Caco-2 (cell line): ENCODE measurements at regions of chr1 and their contacts with region 1.

Region 1: GRCh38 chr1:10209905-10210810 is at the start of gene KIF1B:
- DNase-seq: peak; percentile 96 to 99
- H3K4me3 ChIP-seq: peak within 1 kb of the TSS; percentile 76
- H3K4me3 Mint-ChIP-seq: peak within 1 kb of the TSS; percentile 95
- H3K27ac Mint-ChIP-seq: peak within 1 kb of the TSS; percentile 88
- H3K4me1 ChIP-seq: peaks cover 8% of the 10 kb centered on the region; the same call in 1 of the 2 replicates
- H3K4me1 Mint-ChIP-seq: peaks cover 18% of the 10 kb centered on the region
- H3K27me3 ChIP-seq: no peaks in the 10 kb centered on the region
- H3K27me3 Mint-ChIP-seq: no peaks in the 10 kb centered on the region
- CTCF ChIP-seq: peak; percentile 94 to 95
- total RNA-seq, gene KIF1B: 41.1 and 43.6 TPM in 2 replicates

Region 2: DNA sequence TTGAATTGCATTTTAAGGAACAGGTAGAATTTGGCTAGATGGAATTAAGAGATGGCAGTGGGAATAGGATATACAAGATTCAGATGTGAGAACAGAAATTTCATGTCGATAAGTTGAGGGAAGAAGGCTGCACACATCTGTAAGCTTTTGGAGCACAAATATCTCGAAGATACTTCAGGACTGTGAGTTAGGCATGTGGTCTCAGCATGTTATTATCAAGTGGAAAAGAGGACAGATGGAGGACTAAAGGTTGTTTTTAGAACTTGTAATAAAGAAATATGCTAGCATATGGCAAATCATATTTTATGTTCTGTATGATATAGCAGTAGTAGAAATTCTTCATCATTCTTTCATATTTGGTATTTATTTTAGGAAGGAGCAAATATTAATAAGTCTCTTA is 61.7 kb after region 1 on chr1:
- CTCF ChIA-PET with region 1: interaction called, 6 read pairs
- POLR2A ChIA-PET with region 1: no interaction called
- intact Hi-C with region 1: loop called (anchors 5 kb)
- DNase-seq: no peak
- H3K4me3 ChIP-seq: no peak overlapping the region
- H3K4me3 Mint-ChIP-seq: no peak overlapping the region
- H3K27ac Mint-ChIP-seq: no peak overlapping the region
- H3K4me1 ChIP-seq: peaks cover 26% of the 10 kb centered on the region
- H3K4me1 Mint-ChIP-seq: peaks cover 18% of the 10 kb centered on the region
- H3K27me3 ChIP-seq: no peaks in the 10 kb centered on the region
- H3K27me3 Mint-ChIP-seq: no peaks in the 10 kb centered on the region
- CTCF ChIP-seq: no peak

Region 3: DNA sequence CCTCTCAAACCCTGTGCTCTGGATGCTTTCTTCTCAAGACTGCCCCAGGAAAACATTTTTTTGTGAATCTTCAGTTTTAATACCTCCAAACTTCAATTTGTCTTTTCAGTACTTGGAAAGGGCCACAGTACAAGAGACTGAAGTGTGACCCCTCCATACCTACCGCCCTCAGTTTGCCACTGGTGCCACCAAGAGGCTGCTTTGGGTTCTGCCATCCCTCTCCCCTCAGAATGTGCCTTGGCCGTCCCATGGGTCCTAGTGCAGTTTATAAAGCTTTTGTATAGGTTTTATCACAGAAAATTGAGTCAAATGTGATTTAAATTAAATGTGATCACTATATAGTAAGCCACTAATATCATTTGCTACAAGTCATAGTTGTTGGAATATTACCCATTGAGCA is 127.9 kb after region 1 on chr1:
- CTCF ChIA-PET with region 1: no interaction called
- POLR2A ChIA-PET with region 1: no interaction called
- intact Hi-C with region 1: loop called (anchors 2 kb)
- DNase-seq: peak; percentile 41 to 55
- H3K4me3 ChIP-seq: no peak overlapping the region
- H3K4me3 Mint-ChIP-seq: no peak overlapping the region
- H3K27ac Mint-ChIP-seq: no peak overlapping the region
- H3K4me1 ChIP-seq: peaks cover 10% of the 10 kb centered on the region; the same call in 1 of the 2 replicates
- H3K4me1 Mint-ChIP-seq: peaks cover 15% of the 10 kb centered on the region
- H3K27me3 ChIP-seq: no peaks in the 10 kb centered on the region
- H3K27me3 Mint-ChIP-seq: no peaks in the 10 kb centered on the region
- CTCF ChIP-seq: peak; percentile 71 to 90